Head of caudate nucleus (tissue), 42 donors: ENCODE measurements at regions of chr19 and their contacts with region 1.

Region 1: GRCh38 chr19:8505680-8506401 is 3.4 kb upstream of the PRAM1 start:
- DNase-seq: peak; percentile 60 to 95 (median 88)

Region 2: GRCh38 chr19:8377598-8377997 is 128.2 kb before region 1 on chr19:
- intact Hi-C with region 1: no loop called
- DNase-seq: no peak

Region 3: GRCh38 chr19:8412783-8413628 is 92.8 kb before region 1 on chr19 and contains the start of gene MARCHF2:
- intact Hi-C with region 1: loop called (anchors 10 kb)
- DNase-seq: peak; percentile 91 to 98 (median 96)

Region 4: DNA sequence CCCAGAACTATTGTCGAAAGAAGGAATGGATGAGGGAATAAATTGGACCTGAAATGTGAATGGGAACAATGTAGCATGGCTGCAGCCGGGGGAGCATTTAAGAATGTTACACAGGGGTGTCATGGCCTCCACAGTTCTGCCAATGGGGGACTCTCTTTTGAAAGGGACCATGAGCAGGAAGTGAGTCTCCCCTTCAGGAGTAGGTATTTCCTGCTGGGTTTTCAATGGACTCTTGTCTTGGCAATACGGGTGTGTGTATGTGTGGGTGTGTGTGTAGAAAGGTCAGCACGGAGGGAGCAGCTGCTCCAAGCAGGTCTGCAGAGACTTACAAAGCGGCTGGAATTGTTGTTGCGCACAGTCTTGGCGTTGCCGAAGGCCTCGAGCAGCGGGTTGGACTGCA is 47.0 kb after region 1 on chr19:
- intact Hi-C with region 1: no loop called
- DNase-seq: no peak

Region 5: GRCh38 chr19:8731428-8732169 is 225.8 kb after region 1 on chr19:
- intact Hi-C with region 1: no loop called
- DNase-seq: no peak